ENCODE measurements at regions of chr3 and their contacts with region 1.

Region 1: GRCh38 chr3:128787256-128788240 is 61.6 kb downstream of the RAB7A start:
- DNase-seq: peak in 8 of 14 experiments; percentile 8 to 79 (median 40)
- ATAC-seq: peak; percentile 54
- H3K4me3 ChIP-seq: no peak overlapping the region
- H3K4me3 Mint-ChIP-seq: peak overlapping the region; percentile 80
- H3K27ac ChIP-seq: peak overlapping the region; percentile 60 to 64
- H3K27ac Mint-ChIP-seq: peak overlapping the region; percentile 89
- H3K4me1 ChIP-seq: peaks cover 63% of the 10 kb centered on the region
- H3K4me1 Mint-ChIP-seq: peaks cover 94% of the 10 kb centered on the region
- H3K27me3 ChIP-seq: no peaks in the 10 kb centered on the region
- H3K27me3 Mint-ChIP-seq: no peaks in the 10 kb centered on the region
- CTCF ChIP-seq: peak; percentile 24

Region 2: DNA sequence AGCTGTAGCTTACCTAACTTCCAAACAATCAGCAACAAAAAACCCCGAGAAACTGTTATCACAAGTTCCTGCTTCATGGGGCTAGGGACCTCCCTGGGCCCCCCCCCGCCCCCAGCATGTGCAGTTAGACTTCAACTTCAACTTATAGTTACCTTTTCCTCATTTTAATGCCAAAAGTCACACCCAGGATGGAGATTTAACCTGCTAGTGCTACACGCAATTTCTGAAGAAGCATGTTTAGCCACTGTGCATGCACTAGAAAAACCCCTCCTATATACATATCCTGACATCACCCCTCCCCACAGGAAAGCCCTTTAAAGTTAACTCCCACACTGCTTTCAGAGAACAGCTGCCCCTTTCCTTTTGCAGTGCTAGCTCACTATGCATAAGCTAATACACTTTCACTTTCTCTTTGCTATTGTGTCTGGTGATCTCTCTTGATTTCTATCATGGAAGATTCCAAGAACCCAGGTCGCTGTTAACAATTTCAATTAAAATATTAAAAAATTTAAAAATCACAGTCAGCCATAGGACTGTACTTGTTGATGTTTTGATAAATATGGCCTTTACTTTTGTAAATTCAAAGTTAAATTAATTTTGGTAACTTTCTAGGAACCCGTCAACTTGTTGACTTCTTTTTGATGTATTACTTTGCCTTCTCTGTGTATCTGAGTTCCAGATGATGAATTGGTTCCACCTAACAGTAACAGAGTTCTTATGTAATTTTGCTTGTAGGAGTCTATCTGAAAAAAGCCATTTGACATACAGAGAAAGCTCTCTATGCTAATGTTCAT is 16.7 kb after region 1 on chr3:
- CTCF ChIA-PET with region 1: interaction called, 3 read pairs
- POLR2A ChIA-PET with region 1: interaction called, 42 read pairs
- intact Hi-C with region 1: no loop called
- DNase-seq: peak in 11 of 14 experiments; percentile 26 to 93 (median 44)
- ATAC-seq: peak; percentile 92
- H3K4me3 ChIP-seq: peak overlapping the region; percentile 44
- H3K4me3 Mint-ChIP-seq: peak overlapping the region; percentile 75
- H3K27ac ChIP-seq: peak overlapping the region; percentile 86 to 87
- H3K27ac Mint-ChIP-seq: peak overlapping the region; percentile 96
- H3K4me1 ChIP-seq: peaks cover 50% of the 10 kb centered on the region
- H3K4me1 Mint-ChIP-seq: peaks cover 81% of the 10 kb centered on the region
- H3K27me3 ChIP-seq: no peaks in the 10 kb centered on the region
- H3K27me3 Mint-ChIP-seq: no peaks in the 10 kb centered on the region
- CTCF ChIP-seq: no peak

Region 3: GRCh38 chr3:128845778-128846485 is 58.4 kb after region 1 on chr3:
- CTCF ChIA-PET with region 1: interaction called, 3 read pairs
- POLR2A ChIA-PET with region 1: interaction called, 6 read pairs
- intact Hi-C with region 1: loop called (anchors 1 to 2 kb)
- DNase-seq: peak; percentile 62 to 88 (median 76)
- ATAC-seq: peak; percentile 81
- H3K4me3 ChIP-seq: peak overlapping the region; percentile 58
- H3K4me3 Mint-ChIP-seq: peak overlapping the region; percentile 72
- H3K27ac ChIP-seq: peak overlapping the region; percentile 7 to 18
- H3K27ac Mint-ChIP-seq: peak overlapping the region; percentile 55
- H3K4me1 ChIP-seq: peaks cover 21% of the 10 kb centered on the region
- H3K4me1 Mint-ChIP-seq: peaks cover 14% of the 10 kb centered on the region
- H3K27me3 ChIP-seq: no peaks in the 10 kb centered on the region
- H3K27me3 Mint-ChIP-seq: no peaks in the 10 kb centered on the region
- CTCF ChIP-seq: peak; percentile 90

Region 4: DNA sequence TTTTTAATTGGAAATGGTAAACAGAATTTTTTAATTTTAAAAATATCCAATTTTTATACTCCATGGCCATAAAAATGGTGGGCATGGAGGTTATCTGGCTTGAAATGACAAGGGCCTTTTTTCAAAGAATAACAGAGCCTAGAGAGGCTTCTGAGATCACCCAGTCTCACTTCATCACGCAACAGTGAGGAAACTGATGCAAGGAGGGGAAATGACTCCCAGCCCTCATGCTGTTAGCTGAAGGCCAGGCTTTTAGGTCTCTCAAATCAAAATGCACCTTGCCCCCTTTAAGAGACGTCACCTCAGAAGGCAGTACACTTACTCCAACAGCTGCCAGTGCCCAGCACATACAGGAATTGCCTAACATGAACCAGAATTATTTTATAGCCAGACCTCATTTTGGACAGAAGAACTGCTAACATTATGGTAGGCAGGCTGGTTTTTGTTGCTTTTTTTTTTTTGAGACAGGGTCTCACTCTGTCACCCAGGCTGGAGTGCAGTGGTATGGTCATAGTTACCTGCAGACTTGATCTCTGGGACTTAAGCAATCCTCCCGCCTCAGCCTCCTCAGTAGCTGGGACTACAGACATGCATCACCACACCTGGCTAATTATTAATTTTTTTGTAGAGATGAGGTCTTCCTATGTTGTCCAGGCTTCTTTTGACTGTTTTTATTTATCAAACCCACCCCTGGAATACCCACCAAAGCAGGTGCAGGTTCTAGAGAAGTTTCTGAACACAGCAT is 324.9 kb after region 1 on chr3:
- CTCF ChIA-PET with region 1: no interaction called
- POLR2A ChIA-PET with region 1: no interaction called
- intact Hi-C with region 1: no loop called
- DNase-seq: peak in 2 of 14 experiments; percentile 34 to 36
- ATAC-seq: peak; percentile 27
- H3K4me3 ChIP-seq: no peak overlapping the region
- H3K4me3 Mint-ChIP-seq: peak overlapping the region; percentile 54
- H3K27ac ChIP-seq: peak overlapping the region; percentile 11 to 17
- H3K27ac Mint-ChIP-seq: peak overlapping the region; percentile 73
- H3K4me1 ChIP-seq: peaks cover 84% of the 10 kb centered on the region
- H3K4me1 Mint-ChIP-seq: peaks cover 75% of the 10 kb centered on the region
- H3K27me3 ChIP-seq: no peaks in the 10 kb centered on the region
- H3K27me3 Mint-ChIP-seq: no peaks in the 10 kb centered on the region
- CTCF ChIP-seq: no peak

Measured in CD4-positive, alpha-beta T cell (primary cell).